PC-9 (cell line): ENCODE measurements at regions of chr7 and their contacts with region 1.

Region 1: GRCh38 chr7:155003376-155004214 is 671 bp upstream of the PAXIP1 start:
- DNase-seq: peak; percentile 81 to 86
- H3K4me3 ChIP-seq: peak overlapping the region; percentile 63
- H3K27ac ChIP-seq: peak overlapping the region; percentile 67
- H3K4me1 ChIP-seq: peaks cover 22% of the 10 kb centered on the region
- H3K27me3 ChIP-seq: no peaks in the 10 kb centered on the region
- CTCF ChIP-seq: no peak

Region 2: DNA sequence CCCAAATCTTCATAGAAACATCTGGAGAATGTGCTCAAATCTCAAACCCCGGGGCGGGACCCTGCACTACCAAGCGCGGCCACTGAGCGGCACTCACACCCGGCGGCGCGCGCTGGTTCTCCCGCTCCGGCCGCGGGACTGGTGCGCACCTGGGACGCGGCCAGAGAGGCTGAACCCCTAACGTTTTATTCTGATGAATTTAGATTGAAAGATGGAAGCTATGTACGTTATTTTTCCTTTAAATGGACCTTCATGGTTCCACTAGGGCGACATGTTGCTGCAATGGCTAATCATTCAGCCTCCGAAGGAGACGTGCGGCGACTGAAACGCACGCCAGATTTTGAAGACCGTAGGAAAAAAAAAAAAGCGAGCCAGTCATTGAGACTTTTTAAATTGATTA is 187.1 kb after region 1 on chr7:
- CTCF ChIA-PET with region 1: no interaction called
- POLR2A ChIA-PET with region 1: no interaction called
- intact Hi-C with region 1: loop called (anchors 5 kb)
- DNase-seq: peak in 1 of 2 experiments; percentile 72
- H3K4me3 ChIP-seq: no peak overlapping the region
- H3K27ac ChIP-seq: no peak overlapping the region
- H3K4me1 ChIP-seq: 0 out of 2 replicates have a peak, but pooled peaks cover 5% of the 10 kb centered on the region
- H3K27me3 ChIP-seq: peaks cover 49% of the 10 kb centered on the region
- CTCF ChIP-seq: peak; percentile 98

Region 3: DNA sequence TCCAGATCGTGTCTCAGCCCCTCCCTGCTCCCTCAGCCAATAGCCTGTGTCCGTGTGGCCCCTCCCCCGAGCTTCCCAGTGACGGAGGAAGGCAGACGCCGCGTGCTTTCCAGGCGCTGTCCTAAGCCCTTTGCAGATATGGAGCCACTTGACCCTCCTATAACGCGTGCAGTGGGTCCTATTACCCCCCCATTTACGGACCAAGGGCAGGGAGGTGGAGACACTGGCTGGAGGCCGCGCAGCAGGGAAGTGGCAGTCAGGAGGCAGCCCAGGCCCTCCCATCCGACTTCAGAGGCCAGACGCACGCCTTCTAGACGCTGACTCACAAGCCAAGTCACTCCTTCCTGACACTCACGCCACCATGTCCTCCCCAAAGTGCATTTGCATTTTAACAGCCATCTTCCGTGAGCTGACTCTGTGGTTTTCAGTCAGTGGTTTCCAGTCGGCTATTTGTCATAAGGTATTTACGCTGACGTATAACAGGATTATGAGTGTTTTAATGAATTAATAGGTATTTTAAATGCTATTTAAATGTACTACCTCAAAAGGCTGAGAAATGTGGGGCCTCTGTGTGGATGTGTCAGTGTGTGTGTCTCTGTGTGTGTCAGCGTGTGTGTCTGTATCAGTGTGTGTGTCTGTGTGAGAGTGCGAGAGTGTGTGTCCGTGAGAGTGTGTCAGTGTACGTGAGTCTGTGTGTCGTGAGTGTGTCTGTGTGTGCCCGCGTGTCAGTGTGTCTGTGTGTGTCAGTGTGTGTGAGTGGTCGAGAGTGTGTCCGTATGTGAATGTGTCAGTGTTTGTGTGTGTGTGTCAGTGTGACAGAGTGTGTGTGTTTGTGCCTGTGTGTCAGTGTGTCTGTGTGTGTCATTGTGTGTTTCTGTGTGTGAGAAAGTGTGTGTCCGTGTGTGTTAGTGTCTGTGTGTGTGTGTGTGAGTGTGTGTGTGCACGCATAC is 202.0 kb after region 1 on chr7:
- CTCF ChIA-PET with region 1: no interaction called
- POLR2A ChIA-PET with region 1: no interaction called
- intact Hi-C with region 1: loop called (anchors 5 kb)
- DNase-seq: peak; percentile 91 to 99
- H3K4me3 ChIP-seq: peak overlapping the region; percentile 53
- H3K27ac ChIP-seq: peak overlapping the region; percentile 90
- H3K4me1 ChIP-seq: peaks cover 44% of the 10 kb centered on the region
- H3K27me3 ChIP-seq: no peaks in the 10 kb centered on the region
- CTCF ChIP-seq: no peak